Heart right ventricle (tissue), 16 donors: ENCODE measurements at regions of chr19 and their contacts with region 1.

Region 1: DNA sequence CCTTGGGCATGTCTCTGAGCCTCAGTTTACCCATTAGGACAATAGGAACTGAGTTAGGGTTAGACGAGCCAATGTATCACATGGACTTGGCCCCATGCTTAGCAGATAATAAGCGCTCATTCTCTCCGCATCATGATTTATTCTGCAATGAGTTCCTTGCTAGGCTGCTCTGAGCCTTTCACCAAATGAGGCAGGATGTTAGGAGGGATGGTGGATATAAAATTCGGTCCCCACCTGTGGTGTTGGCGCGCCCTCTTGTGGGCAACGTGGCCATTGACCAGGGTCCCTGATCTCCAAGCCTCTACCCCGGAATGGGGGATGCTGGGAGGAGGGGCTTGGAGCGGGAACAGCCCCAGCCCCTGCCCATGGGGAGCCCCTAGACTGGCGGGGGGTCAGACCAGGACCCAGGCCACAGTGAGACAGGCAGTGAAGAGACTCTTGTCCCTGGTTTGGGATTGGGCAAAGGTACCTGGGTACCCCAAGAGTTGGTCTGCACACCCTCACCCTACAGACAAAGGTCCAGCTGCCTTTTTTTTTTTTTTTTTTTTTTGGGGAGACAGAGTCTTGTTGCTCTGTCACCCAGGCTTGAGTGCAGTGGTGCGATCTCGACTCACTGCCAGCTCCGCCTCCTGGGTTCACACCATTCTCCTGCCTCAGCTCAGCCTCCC is 43.9 kb downstream of the CERS4 start:
- DNase-seq: peak; percentile 84 to 89
- ATAC-seq: peak; percentile 45 to 75 (median 62)
- H3K4me3 ChIP-seq: no peak overlapping the region
- H3K27ac ChIP-seq: no peak overlapping the region
- H3K4me1 ChIP-seq: peaks cover 0 to 28% (median 4%) of the 10 kb centered on the region in 9 donors
- H3K27me3 ChIP-seq: no peaks in the 10 kb centered on the region
- CTCF ChIP-seq: peak; percentile 91 to 97 (median 96)

Region 2: DNA sequence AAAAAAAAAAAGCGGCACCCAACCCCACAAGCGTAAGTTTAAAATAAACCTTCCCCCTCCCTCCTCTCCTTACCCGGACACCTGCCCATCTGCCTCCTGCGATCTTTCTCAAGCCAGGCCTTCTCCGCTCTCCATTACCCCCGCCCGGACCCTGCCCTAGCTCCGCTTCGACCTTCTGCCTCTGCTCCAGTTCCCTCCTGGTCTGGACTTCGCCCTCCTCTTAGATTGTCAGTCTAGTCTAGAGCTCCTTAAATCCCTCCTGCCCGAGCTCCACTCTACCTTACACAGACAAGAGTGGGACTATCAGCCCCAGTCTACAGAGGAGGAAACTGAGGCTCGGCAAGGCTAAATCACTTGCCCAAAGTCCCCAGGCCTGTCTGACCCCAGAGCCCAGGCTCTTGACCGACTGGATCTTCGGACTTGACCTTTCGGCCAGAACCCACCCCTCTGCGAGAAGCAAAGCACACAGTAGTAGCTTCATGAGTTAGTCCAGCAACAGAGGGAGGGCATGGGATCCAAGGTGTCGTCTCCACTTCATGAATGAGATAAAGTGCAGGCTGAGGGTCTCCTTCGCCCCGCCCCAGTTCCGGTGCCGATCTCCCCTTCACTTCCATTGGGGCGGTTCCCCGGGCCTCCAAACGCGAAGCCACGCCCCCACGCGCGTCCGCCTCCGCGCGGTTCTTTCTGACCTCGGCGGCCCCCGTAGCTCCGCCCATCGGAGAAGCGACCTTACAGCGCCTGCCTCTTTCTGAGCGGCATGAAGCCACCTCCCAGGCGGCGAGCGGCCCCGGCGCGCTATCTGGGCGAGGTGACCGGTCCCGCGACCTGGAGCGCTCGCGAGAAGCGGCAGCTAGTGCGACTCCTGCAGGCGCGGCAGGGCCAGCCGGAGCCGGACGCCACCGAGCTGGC is 333.2 kb before region 1 on chr19 and contains the start of gene SNAPC2:
- intact Hi-C with region 1: loop called in 1 of 10 experiments (anchors 5 kb)
- DNase-seq: peak; percentile 97
- ATAC-seq: peak; percentile 61 to 78 (median 74)
- H3K4me3 ChIP-seq: peak within 1 kb of the TSS; percentile 55 to 90 (median 76)
- H3K27ac ChIP-seq: peak within 1 kb of the TSS; percentile 66 to 94 (median 88)
- H3K4me1 ChIP-seq: peaks cover 12 to 71% (median 45%) of the 10 kb centered on the region in 9 donors
- H3K27me3 ChIP-seq: peaks cover 11 to 50% (median 43%) of the 10 kb centered on the region in 7 donors
- CTCF ChIP-seq: peak in 2 of 9 donors; percentile 26 to 27
- total RNA-seq, gene SNAPC2: 5.7 to 12.9 (median 9.5) TPM

Region 3: GRCh38 chr19:7953060-7953459 is 300.0 kb before region 1 on chr19:
- intact Hi-C with region 1: loop called in 4 of 10 experiments (anchors 10 kb)
- DNase-seq: no peak
- ATAC-seq: no peak
- H3K4me3 ChIP-seq: no peak overlapping the region
- H3K27ac ChIP-seq: no peak overlapping the region
- H3K4me1 ChIP-seq: peaks cover 0 to 19% (median 8%) of the 10 kb centered on the region in 9 donors
- H3K27me3 ChIP-seq: no peaks in the 10 kb centered on the region
- CTCF ChIP-seq: no peak

Region 4: DNA sequence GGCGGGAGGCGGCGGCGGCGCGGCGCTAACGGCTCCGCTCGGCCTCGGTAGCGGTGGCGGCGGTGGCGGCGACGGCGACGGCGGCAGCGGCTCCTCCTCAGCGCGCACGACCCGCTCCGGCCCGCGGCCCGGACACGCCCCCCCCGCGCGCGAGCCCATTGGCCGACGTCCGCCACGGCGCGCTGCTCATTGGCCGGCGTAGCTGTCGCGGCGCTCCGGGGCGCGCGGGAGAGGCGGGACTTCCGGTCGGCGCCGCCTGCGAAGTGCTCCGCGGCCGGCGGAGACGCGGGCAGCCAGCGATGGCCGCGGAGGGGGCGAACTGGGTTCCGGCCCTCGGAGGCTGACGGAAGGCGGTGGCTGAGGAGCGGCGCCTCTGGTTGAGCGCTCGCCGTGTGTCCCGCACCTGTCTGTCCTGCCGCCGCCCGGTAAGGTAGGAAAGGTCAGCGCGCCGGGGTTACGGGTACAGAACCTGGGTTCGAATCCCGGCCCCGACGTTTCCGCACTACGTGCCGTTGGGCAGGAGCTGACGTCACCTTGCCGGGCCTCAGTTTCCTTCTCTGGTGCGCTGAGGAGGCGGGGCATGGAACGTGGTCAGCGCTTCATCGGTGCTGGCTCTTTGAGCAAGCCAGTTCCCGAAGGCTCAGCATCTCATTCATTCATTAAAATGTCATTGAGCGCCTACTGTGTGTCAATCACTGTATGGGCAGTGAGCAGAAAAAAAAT is 247.4 kb before region 1 on chr19 and contains the start of gene ELAVL1:
- intact Hi-C with region 1: loop called in 2 of 10 experiments (anchors 1 to 10 kb)
- DNase-seq: peak; percentile 88 to 93
- ATAC-seq: peak; percentile 90 to 97 (median 94)
- H3K4me3 ChIP-seq: peak within 1 kb of the TSS; percentile 64 to 96 (median 85)
- H3K27ac ChIP-seq: peak within 1 kb of the TSS; percentile 68 to 93 (median 82)
- H3K4me1 ChIP-seq: peaks cover 25 to 51% (median 42%) of the 10 kb centered on the region in 9 donors
- H3K27me3 ChIP-seq: no peaks in the 10 kb centered on the region
- CTCF ChIP-seq: no peak
- total RNA-seq, gene ELAVL1: 44.2 to 60.1 (median 55.3) TPM

Region 5: GRCh38 chr19:8208922-8209461 is 44.1 kb before region 1 on chr19 and contains the start of gene CERS4:
- intact Hi-C with region 1: loop called in 3 of 10 experiments (anchors 2 to 5 kb)
- DNase-seq: peak; percentile 79 to 86
- ATAC-seq: peak; percentile 79 to 94 (median 90)
- H3K4me3 ChIP-seq: peak within 1 kb of the TSS; percentile 74 to 92 (median 84)
- H3K27ac ChIP-seq: peak within 1 kb of the TSS; percentile 13 to 89 (median 81)
- H3K4me1 ChIP-seq: peaks cover 0 to 25% (median 18%) of the 10 kb centered on the region in 9 donors
- H3K27me3 ChIP-seq: peaks cover 0 to 18% (median 0%) of the 10 kb centered on the region in 7 donors
- CTCF ChIP-seq: no peak
- total RNA-seq, gene CERS4: 13.9 to 25.0 (median 17.7) TPM

Region 6: DNA sequence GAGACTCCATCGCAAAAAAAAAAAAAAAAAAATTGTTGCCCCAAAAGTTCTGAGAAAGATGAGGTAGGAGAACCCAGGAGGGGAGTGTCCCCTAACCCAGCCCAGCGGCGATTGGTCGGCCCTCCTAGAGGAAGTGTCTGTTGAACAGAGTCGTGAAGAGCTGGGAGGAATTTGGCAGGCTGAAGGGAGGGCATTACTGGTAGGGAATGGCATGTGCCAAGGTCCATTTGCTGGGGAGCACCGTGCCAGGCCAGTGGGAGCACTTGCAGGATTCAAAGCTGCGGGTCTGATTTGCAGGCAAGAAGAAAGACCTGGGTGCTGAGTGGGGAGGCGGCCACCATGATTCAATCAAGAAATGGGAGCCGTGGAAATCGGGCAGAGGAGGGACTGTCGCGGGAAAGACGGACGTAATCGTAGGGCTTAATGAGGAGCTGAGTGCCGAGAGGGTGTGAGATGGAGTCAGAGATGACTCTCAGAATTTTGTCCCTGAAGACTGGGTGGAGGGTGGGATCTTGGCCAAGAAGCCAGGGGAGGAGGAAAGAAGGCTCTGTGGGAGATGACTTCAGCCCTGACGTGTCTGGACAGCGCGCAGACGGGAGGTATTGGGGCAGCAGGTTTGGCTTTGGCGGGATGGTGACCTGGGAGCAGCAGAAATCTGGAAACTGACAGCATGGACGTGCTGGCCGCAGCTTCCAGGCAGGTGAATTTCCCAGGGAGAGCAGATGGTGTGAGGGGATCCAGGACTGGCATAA is 28.5 kb before region 1 on chr19:
- intact Hi-C with region 1: no loop called
- DNase-seq: peak; percentile 30
- ATAC-seq: peak; percentile 37 to 88 (median 72)
- H3K4me3 ChIP-seq: no peak overlapping the region
- H3K27ac ChIP-seq: no peak overlapping the region
- H3K4me1 ChIP-seq: peaks cover 0 to 14% (median 6%) of the 10 kb centered on the region in 9 donors
- H3K27me3 ChIP-seq: no peaks in the 10 kb centered on the region
- CTCF ChIP-seq: no peak